Naive thymus-derived CD4-positive, alpha-beta T cell (primary cell): ENCODE measurements at regions of chr15 and their contacts with region 1.

Region 1: GRCh38 chr15:38440353-38441129 is 13.4 kb upstream of the FAM98B start:
- DNase-seq: peak in 8 of 9 donors; percentile 33 to 72 (median 54)
- ATAC-seq: peak; percentile 99
- H3K4me3 ChIP-seq: no peak overlapping the region
- H3K4me3 Mint-ChIP-seq: peak overlapping the region in 1 of 10 donors; percentile 11
- H3K27ac ChIP-seq: no peak overlapping the region
- H3K27ac Mint-ChIP-seq: peak overlapping the region in 5 of 9 donors; percentile 5 to 21 (median 16)
- H3K4me1 ChIP-seq: no peaks in the 10 kb centered on the region
- H3K4me1 Mint-ChIP-seq: peaks cover 0 to 15% (median 6%) of the 10 kb centered on the region in 7 donors
- H3K27me3 ChIP-seq: no peaks in the 10 kb centered on the region
- H3K27me3 Mint-ChIP-seq: peaks cover 18 to 53% (median 33%) of the 10 kb centered on the region in 5 donors

Region 2: DNA sequence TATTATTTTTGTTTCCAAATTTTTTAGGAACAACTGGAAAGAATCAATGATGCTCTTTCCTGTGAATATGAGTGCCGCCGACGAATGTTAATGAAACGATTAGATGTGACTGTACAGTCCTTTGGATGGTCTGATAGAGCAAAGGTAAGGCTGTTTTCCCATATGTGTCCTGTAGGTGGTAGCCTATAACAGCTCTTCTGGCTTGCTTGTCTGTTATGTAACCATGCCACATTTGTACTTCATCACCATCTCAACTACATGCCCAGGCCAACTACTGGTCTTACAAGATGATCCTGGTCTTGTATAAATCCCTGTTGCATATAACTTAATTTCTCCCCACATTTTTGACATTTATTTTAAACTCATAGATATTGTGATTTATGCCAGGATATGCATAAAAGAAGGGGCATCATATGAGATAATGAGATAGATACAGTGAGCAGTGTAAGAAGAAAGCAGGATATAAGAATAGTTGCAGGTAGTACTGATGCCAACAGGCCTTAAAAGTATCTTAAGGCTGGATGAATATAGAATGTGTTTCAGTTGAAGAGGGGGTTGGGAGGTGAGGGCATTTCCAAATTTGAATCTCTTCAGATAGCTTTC is 33.7 kb after region 1 on chr15:
- CTCF ChIA-PET with region 1: interaction called, 14 read pairs
- POLR2A ChIA-PET with region 1: no interaction called
- intact Hi-C with region 1: loop called (anchors 1 to 5 kb)
- DNase-seq: peak in 7 of 9 donors; percentile 53 to 75 (median 62)
- ATAC-seq: peak; percentile 100
- H3K4me3 ChIP-seq: no peak overlapping the region
- H3K4me3 Mint-ChIP-seq: peak overlapping the region in 2 of 10 donors; percentile 4 to 10
- H3K27ac ChIP-seq: no peak overlapping the region
- H3K27ac Mint-ChIP-seq: peak overlapping the region; percentile 10 to 88 (median 81)
- H3K4me1 ChIP-seq: peaks cover 0 to 5% of the 10 kb centered on the region in 2 donors
- H3K4me1 Mint-ChIP-seq: peaks cover 10 to 23% (median 13%) of the 10 kb centered on the region in 7 donors
- H3K27me3 ChIP-seq: no peaks in the 10 kb centered on the region
- H3K27me3 Mint-ChIP-seq: no peaks in the 10 kb centered on the region

Region 3: DNA sequence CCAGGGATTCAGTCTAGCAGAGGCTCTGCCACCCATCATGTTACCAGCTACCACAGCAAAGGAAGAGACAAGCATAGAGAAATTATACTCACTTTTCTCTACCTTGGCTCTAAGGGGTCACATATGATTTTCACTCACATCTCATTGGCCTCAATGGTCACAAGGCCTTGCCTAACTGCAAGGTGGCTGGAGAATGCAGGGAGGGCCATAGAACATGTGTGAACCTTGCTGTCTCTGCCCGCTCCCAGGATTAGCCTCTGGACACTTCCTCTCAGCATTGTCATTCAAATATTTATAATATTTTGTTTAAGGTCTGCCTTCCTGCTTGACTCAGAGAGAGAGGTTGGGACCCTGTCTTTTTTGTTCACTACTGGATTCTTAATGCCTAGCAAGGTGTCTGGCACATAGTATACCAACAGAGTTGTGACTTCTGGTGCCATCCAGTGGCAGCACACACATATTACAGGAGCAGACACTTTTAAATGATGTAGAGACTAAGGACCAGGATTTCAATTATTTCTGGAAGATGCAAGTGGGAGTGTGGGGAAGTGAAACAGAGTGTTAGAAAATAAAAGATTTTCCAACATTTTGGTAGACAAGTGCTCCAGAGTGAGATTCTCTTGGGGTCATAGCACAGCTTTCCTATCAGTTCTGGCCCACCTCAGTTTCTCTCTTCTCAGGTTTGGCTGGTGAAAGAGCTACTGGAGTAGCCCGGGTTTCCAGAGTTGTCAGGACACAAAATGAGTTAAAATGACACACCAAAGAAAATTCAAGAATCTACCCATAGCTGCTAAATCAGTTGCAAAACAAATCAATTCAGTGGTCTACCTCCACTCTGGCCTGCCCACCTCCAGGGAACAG is 243.1 kb after region 1 on chr15:
- CTCF ChIA-PET with region 1: interaction called, 29 read pairs
- POLR2A ChIA-PET with region 1: no interaction called
- intact Hi-C with region 1: loop called in 1 of 2 experiments (anchors 1 kb)
- DNase-seq: peak; percentile 43 to 79 (median 71)
- ATAC-seq: peak; percentile 76
- H3K4me3 ChIP-seq: peak overlapping the region; percentile 22
- H3K4me3 Mint-ChIP-seq: peak overlapping the region; percentile 1 to 76 (median 55)
- H3K27ac ChIP-seq: peak overlapping the region; percentile 74
- H3K27ac Mint-ChIP-seq: peak overlapping the region; percentile 83 to 99 (median 95)
- H3K4me1 ChIP-seq: peaks cover 62 to 63% of the 10 kb centered on the region in 2 donors
- H3K4me1 Mint-ChIP-seq: peaks cover 53 to 90% (median 84%) of the 10 kb centered on the region in 7 donors
- H3K27me3 ChIP-seq: no peaks in the 10 kb centered on the region
- H3K27me3 Mint-ChIP-seq: no peaks in the 10 kb centered on the region

Region 4: GRCh38 chr15:38817427-38818156 is 377.1 kb after region 1 on chr15:
- CTCF ChIA-PET with region 1: no interaction called
- POLR2A ChIA-PET with region 1: no interaction called
- intact Hi-C with region 1: loop called in 1 of 2 experiments (anchors 5 kb)
- DNase-seq: peak; percentile 43 to 84 (median 72)
- ATAC-seq: peak; percentile 93
- H3K4me3 ChIP-seq: no peak overlapping the region
- H3K4me3 Mint-ChIP-seq: peak overlapping the region in 3 of 10 donors; percentile 13 to 39 (median 30)
- H3K27ac ChIP-seq: no peak overlapping the region
- H3K27ac Mint-ChIP-seq: no peak overlapping the region
- H3K4me1 ChIP-seq: no peaks in the 10 kb centered on the region
- H3K4me1 Mint-ChIP-seq: peaks cover 0 to 5% (median 0%) of the 10 kb centered on the region in 7 donors
- H3K27me3 ChIP-seq: no peaks in the 10 kb centered on the region
- H3K27me3 Mint-ChIP-seq: peaks cover 0 to 15% (median 13%) of the 10 kb centered on the region in 5 donors

Region 5: GRCh38 chr15:39580117-39580484 is 1139.6 kb after region 1 on chr15:
- CTCF ChIA-PET with region 1: no interaction called
- POLR2A ChIA-PET with region 1: no interaction called
- intact Hi-C with region 1: loop called in 1 of 2 experiments (anchors 10 kb)
- DNase-seq: peak; percentile 23 to 91 (median 63)
- ATAC-seq: peak; percentile 92
- H3K4me3 ChIP-seq: peak overlapping the region; percentile 26
- H3K4me3 Mint-ChIP-seq: peak overlapping the region in 7 of 10 donors; percentile 16 to 82 (median 64)
- H3K27ac ChIP-seq: no peak overlapping the region
- H3K27ac Mint-ChIP-seq: no peak overlapping the region
- H3K4me1 ChIP-seq: peaks cover 0 to 11% of the 10 kb centered on the region in 2 donors
- H3K4me1 Mint-ChIP-seq: peaks cover 0 to 31% (median 14%) of the 10 kb centered on the region in 7 donors
- H3K27me3 ChIP-seq: peaks cover 0 to 5% of the 10 kb centered on the region in 2 donors
- H3K27me3 Mint-ChIP-seq: peaks cover 53 to 74% (median 66%) of the 10 kb centered on the region in 5 donors